Calu3 (cell line): ENCODE measurements at regions of chr5 and their contacts with region 1.

Region 1: GRCh38 chr5:26518065-26518464 is 520.3 kb downstream of the CDH9 start:
- DNase-seq: no peak
- H3K4me3 Mint-ChIP-seq: no peak overlapping the region
- H3K27ac Mint-ChIP-seq: no peak overlapping the region
- H3K4me1 Mint-ChIP-seq: no peaks in the 10 kb centered on the region
- H3K27me3 Mint-ChIP-seq: no peaks in the 10 kb centered on the region
- CTCF ChIP-seq: no peak

Region 2: GRCh38 chr5:26434672-26435071 is 83.4 kb before region 1 on chr5:
- CTCF ChIA-PET with region 1: no interaction called
- intact Hi-C with region 1: no loop called
- DNase-seq: no peak
- H3K4me3 Mint-ChIP-seq: no peak overlapping the region
- H3K27ac Mint-ChIP-seq: no peak overlapping the region
- H3K4me1 Mint-ChIP-seq: no peaks in the 10 kb centered on the region
- H3K27me3 Mint-ChIP-seq: no peaks in the 10 kb centered on the region
- CTCF ChIP-seq: no peak

Region 3: DNA sequence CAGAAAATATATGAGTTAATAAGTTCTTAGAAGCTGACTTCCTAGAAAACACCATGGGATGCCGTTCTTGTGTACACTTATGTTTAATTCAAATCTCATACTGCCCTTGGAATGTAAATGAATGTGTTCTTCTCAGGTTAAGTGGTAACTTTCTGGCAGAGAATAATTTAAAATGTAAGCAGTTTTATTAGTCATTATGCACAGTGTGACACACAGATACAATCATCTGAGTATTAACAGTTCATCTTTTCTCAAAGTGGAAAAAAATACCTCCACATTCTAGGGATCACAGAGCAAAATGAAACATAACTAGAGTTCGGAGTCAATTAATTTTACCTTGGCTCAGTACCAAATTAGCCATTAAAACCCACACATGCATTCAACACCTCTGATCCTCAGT is 12.2 kb after region 1 on chr5:
- CTCF ChIA-PET with region 1: no interaction called
- intact Hi-C with region 1: no loop called
- DNase-seq: no peak
- H3K4me3 Mint-ChIP-seq: no peak overlapping the region
- H3K27ac Mint-ChIP-seq: no peak overlapping the region
- H3K4me1 Mint-ChIP-seq: no peaks in the 10 kb centered on the region
- H3K27me3 Mint-ChIP-seq: no peaks in the 10 kb centered on the region
- CTCF ChIP-seq: no peak

Region 4: DNA sequence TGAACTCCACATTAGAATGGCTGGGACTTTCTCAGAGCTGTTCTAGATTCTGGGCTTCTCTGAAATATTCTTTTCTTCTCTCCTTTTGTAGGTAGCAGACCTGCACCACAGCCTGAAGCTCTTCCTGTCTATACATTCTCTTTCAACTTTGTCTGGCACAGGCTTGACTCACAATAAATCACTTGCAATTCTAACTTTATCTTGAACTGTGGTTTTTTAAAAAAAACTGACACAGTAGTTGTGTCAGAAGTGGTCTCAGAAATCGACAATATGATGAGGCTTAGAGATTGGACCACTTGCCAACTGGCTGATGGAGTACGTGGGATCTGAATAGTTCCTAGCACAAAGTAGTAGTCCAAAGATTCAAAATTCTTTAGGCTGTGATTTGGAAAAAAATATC is 544.4 kb after region 1 on chr5:
- CTCF ChIA-PET with region 1: no interaction called
- intact Hi-C with region 1: loop called (anchors 5 kb)
- DNase-seq: no peak
- H3K4me3 Mint-ChIP-seq: no peak overlapping the region
- H3K27ac Mint-ChIP-seq: no peak overlapping the region
- H3K4me1 Mint-ChIP-seq: no peaks in the 10 kb centered on the region
- H3K27me3 Mint-ChIP-seq: no peaks in the 10 kb centered on the region
- CTCF ChIP-seq: no peak